Naive thymus-derived CD4-positive, alpha-beta T cell (primary cell): ENCODE measurements at regions of chr14 and their contacts with region 1.

Region 1: GRCh38 chr14:106308839-106309389 is 782.5 kb downstream of the TMEM121 start:
- DNase-seq: peak; percentile 46 to 88 (median 62)
- ATAC-seq: peak; percentile 94
- H3K4me3 ChIP-seq: no peak overlapping the region
- H3K4me3 Mint-ChIP-seq: peak overlapping the region in 3 of 10 donors; percentile 32 to 66 (median 44)
- H3K27ac ChIP-seq: no peak overlapping the region
- H3K27ac Mint-ChIP-seq: peak overlapping the region; percentile 28 to 94 (median 60)
- H3K4me1 ChIP-seq: no peaks in the 10 kb centered on the region
- H3K4me1 Mint-ChIP-seq: peaks cover 0 to 5% (median 0%) of the 10 kb centered on the region in 7 donors
- H3K27me3 ChIP-seq: no peaks in the 10 kb centered on the region
- H3K27me3 Mint-ChIP-seq: peaks cover 0 to 44% (median 5%) of the 10 kb centered on the region in 5 donors

Region 2: DNA sequence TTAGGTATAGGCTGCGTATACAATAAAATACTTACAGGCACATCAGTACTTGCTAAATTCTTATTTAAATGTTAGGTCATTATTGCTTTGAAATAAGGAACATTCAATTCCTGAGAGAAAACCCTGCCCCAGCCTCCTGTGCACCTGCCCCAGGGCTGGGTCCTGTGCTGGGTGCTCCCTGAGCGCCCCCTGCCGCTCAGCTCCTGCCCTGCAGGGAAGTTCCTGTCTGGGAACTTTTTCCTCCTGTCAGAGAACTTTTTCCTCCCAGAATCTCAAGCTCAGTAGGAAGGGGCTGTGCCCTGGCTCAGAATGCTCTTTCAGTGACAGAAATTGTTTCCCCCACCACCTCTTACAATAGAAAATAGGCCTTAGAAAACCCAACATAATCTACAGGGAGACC is 31.4 kb before region 1 on chr14:
- CTCF ChIA-PET with region 1: no interaction called
- POLR2A ChIA-PET with region 1: no interaction called
- intact Hi-C with region 1: no loop called
- DNase-seq: peak in 5 of 9 donors; percentile 11 to 44 (median 38)
- ATAC-seq: peak; percentile 67
- H3K4me3 ChIP-seq: no peak overlapping the region
- H3K4me3 Mint-ChIP-seq: peak overlapping the region in 2 of 10 donors; percentile 40 to 45
- H3K27ac ChIP-seq: no peak overlapping the region
- H3K27ac Mint-ChIP-seq: peak overlapping the region in 5 of 9 donors; percentile 60 to 87 (median 78)
- H3K4me1 ChIP-seq: peaks cover 7 to 22% of the 10 kb centered on the region in 2 donors
- H3K4me1 Mint-ChIP-seq: peaks cover 12 to 30% (median 22%) of the 10 kb centered on the region in 7 donors
- H3K27me3 ChIP-seq: peaks cover 0 to 5% of the 10 kb centered on the region in 2 donors
- H3K27me3 Mint-ChIP-seq: peaks cover 5 to 54% (median 25%) of the 10 kb centered on the region in 5 donors

Region 3: DNA sequence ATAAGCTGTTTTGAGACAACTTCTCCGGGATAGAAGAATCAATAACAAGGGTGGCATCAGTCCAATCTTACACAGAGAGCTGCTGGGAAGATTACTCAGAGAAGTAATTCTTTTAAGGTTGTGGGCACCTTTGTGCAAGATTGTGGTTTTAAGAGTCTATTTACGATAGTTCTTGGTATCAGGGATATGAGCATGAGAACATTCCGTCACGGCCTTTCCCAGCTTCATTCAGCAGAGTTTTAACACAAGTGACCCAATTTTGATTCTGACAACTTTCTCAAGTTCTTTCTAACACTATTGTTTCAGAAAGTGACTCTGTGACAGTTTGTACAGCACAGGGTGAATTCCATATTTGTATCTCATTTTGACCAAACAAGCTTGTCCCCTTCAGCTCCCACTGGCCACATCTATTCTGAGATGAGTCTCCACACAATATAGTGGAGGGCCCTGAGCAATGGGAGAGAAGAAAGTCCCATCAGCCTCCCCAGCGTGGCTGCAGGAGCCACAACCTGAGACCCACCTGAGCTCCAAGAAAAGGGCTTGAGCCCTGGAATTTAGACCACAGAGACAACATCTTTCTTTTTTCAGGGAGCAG is 86.6 kb after region 1 on chr14:
- CTCF ChIA-PET with region 1: no interaction called
- POLR2A ChIA-PET with region 1: no interaction called
- intact Hi-C with region 1: no loop called
- DNase-seq: peak in 6 of 9 donors; percentile 18 to 55 (median 36)
- ATAC-seq: peak; percentile 69
- H3K4me3 ChIP-seq: no peak overlapping the region
- H3K4me3 Mint-ChIP-seq: peak overlapping the region in 9 of 10 donors; percentile 47 to 78 (median 59)
- H3K27ac ChIP-seq: peak overlapping the region; percentile 56
- H3K27ac Mint-ChIP-seq: peak overlapping the region; percentile 43 to 94 (median 78)
- H3K4me1 ChIP-seq: peaks cover 0 to 21% of the 10 kb centered on the region in 2 donors
- H3K4me1 Mint-ChIP-seq: peaks cover 20 to 57% (median 29%) of the 10 kb centered on the region in 7 donors
- H3K27me3 ChIP-seq: peaks cover 0 to 3% of the 10 kb centered on the region in 2 donors
- H3K27me3 Mint-ChIP-seq: peaks cover 0 to 19% (median 12%) of the 10 kb centered on the region in 5 donors

Region 4: GRCh38 chr14:106417224-106418049 is 108.5 kb after region 1 on chr14:
- CTCF ChIA-PET with region 1: interaction called, 4 read pairs
- POLR2A ChIA-PET with region 1: no interaction called
- intact Hi-C with region 1: loop called in 1 of 2 experiments (anchors 10 kb)
- DNase-seq: peak; percentile 56 to 89 (median 72)
- ATAC-seq: peak; percentile 90
- H3K4me3 ChIP-seq: no peak overlapping the region
- H3K4me3 Mint-ChIP-seq: peak overlapping the region in 1 of 10 donors; percentile 36
- H3K27ac ChIP-seq: no peak overlapping the region
- H3K27ac Mint-ChIP-seq: peak overlapping the region in 8 of 9 donors; percentile 2 to 84 (median 56)
- H3K4me1 ChIP-seq: no peaks in the 10 kb centered on the region
- H3K4me1 Mint-ChIP-seq: peaks cover 0 to 13% (median 11%) of the 10 kb centered on the region in 7 donors
- H3K27me3 ChIP-seq: no peaks in the 10 kb centered on the region
- H3K27me3 Mint-ChIP-seq: peaks cover 4 to 35% (median 10%) of the 10 kb centered on the region in 5 donors

Region 5: GRCh38 chr14:106665814-106666213 is 356.9 kb after region 1 on chr14:
- CTCF ChIA-PET with region 1: no interaction called
- POLR2A ChIA-PET with region 1: no interaction called
- intact Hi-C with region 1: loop called in 1 of 2 experiments (anchors 2 kb)
- DNase-seq: peak in 1 of 9 donors; percentile 31
- ATAC-seq: no peak
- H3K4me3 ChIP-seq: no peak overlapping the region
- H3K4me3 Mint-ChIP-seq: peak overlapping the region in 1 of 10 donors; percentile 2
- H3K27ac ChIP-seq: no peak overlapping the region
- H3K27ac Mint-ChIP-seq: no peak overlapping the region
- H3K4me1 ChIP-seq: peaks cover 0 to 13% of the 10 kb centered on the region in 2 donors
- H3K4me1 Mint-ChIP-seq: peaks cover 5 to 33% (median 17%) of the 10 kb centered on the region in 7 donors
- H3K27me3 ChIP-seq: no peaks in the 10 kb centered on the region
- H3K27me3 Mint-ChIP-seq: peaks cover 5 to 56% (median 10%) of the 10 kb centered on the region in 5 donors